ENCODE measurements at regions of chr11 and their contacts with region 1.

Region 1: GRCh38 chr11:32323814-32324130 is 111.6 kb downstream of the WT1 start:
- DNase-seq: no peak
- H3K4me3 ChIP-seq: no peak overlapping the region
- H3K27ac ChIP-seq: no peak overlapping the region
- H3K4me1 ChIP-seq: no peaks in the 10 kb centered on the region
- H3K27me3 ChIP-seq: peaks cover 12% of the 10 kb centered on the region
- CTCF ChIP-seq: no peak

Region 2: GRCh38 chr11:32312865-32313403 is 10.8 kb before region 1 on chr11:
- CTCF ChIA-PET with region 1: interaction called, 18 read pairs
- POLR2A ChIA-PET with region 1: no interaction called
- intact Hi-C with region 1: no loop called
- DNase-seq: peak; percentile 97
- H3K4me3 ChIP-seq: no peak overlapping the region
- H3K27ac ChIP-seq: no peak overlapping the region
- H3K4me1 ChIP-seq: peaks cover 9% of the 10 kb centered on the region
- H3K27me3 ChIP-seq: no peaks in the 10 kb centered on the region
- CTCF ChIP-seq: peak; percentile 100

Region 3: DNA sequence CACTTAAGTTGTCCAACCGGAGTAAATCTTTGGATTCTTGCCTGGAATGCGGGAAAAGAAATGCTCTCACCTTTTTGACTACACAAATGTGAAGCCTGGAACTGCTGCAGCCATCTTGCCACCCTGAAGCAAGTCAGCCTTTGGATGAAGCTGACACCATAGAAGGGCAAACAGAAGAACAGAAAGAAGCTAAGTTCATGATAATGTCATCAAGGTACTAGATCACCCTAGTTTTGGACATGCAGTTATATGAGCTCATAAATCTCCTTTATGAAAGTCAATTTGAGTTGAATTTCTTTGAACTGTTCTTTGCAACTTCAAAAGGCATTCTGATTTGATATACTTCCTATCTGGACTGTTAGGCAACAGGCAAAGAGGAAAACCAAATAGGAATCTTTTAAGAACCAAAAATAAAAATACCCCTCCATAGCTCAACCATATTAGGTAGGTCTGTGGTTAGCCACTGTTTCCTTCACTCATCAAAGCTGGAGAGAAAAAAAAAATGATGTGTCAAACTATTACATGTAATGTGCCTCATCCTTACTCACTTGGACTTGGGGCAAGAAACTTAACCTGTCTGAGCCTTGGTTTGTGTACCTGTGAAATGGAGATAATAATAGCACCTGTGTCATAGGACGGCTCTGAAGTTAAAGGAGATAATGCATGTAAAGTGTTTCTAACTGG is 19.7 kb after region 1 on chr11:
- CTCF ChIA-PET with region 1: no interaction called
- POLR2A ChIA-PET with region 1: no interaction called
- intact Hi-C with region 1: no loop called
- DNase-seq: no peak
- H3K4me3 ChIP-seq: no peak overlapping the region
- H3K27ac ChIP-seq: no peak overlapping the region
- H3K4me1 ChIP-seq: no peaks in the 10 kb centered on the region
- H3K27me3 ChIP-seq: no peaks in the 10 kb centered on the region
- CTCF ChIP-seq: no peak

Region 4: DNA sequence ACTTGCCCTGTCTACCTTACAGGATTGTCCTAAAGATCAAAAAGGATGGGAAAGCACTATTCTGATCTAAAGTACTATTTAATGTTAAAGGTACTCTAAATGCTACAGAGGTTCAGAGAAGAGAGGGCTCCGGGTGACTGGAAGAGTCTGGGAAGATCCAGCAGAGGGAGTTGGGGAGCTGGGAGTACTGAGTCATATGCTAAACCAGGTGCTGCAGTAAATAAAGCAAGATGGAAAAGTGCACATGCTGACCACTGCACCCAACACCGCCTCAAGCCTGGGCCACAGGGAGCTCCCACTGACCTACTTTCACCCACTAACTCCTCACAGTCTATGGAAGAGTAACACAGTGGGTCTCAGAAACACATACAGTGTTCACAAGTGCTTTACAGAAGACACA is 62.2 kb after region 1 on chr11:
- CTCF ChIA-PET with region 1: interaction called, 11 read pairs
- POLR2A ChIA-PET with region 1: no interaction called
- intact Hi-C with region 1: no loop called
- DNase-seq: peak; percentile 93
- H3K4me3 ChIP-seq: no peak overlapping the region
- H3K27ac ChIP-seq: peak overlapping the region; percentile 52
- H3K4me1 ChIP-seq: peaks cover 54% of the 10 kb centered on the region
- H3K27me3 ChIP-seq: no peaks in the 10 kb centered on the region
- CTCF ChIP-seq: peak; percentile 100

Region 5: GRCh38 chr11:32435511-32435941 is 111.8 kb after region 1 on chr11 and contains the start of gene WT1:
- CTCF ChIA-PET with region 1: no interaction called
- POLR2A ChIA-PET with region 1: no interaction called
- intact Hi-C with region 1: loop called (anchors 2 kb)
- DNase-seq: peak; percentile 86
- H3K4me3 ChIP-seq: peak within 1 kb of the TSS; percentile 41
- H3K27ac ChIP-seq: no peak within 1 kb of the TSS
- H3K4me1 ChIP-seq: peaks cover 48% of the 10 kb centered on the region
- H3K27me3 ChIP-seq: peaks cover 98% of the 10 kb centered on the region
- CTCF ChIP-seq: no peak
- total RNA-seq, gene WT1: 8.6 and 10.4 TPM in 2 replicates

Region 6: GRCh38 chr11:32792948-32793475 is 469.2 kb after region 1 on chr11:
- CTCF ChIA-PET with region 1: interaction called, 4 read pairs
- POLR2A ChIA-PET with region 1: no interaction called
- intact Hi-C with region 1: loop called (anchors 2 kb)
- DNase-seq: peak; percentile 84
- H3K4me3 ChIP-seq: peak overlapping the region; percentile 13
- H3K27ac ChIP-seq: no peak overlapping the region
- H3K4me1 ChIP-seq: no peaks in the 10 kb centered on the region
- H3K27me3 ChIP-seq: peaks cover 36% of the 10 kb centered on the region
- CTCF ChIP-seq: peak; percentile 98